Mammary epithelial cell (primary cell): ENCODE measurements at regions of chr2 and their contacts with region 1.

Region 1: GRCh38 chr2:7203055-7203467 is 285.8 kb downstream of the RNF144A start:
- DNase-seq: peak; percentile 26
- H3K4me3 ChIP-seq: no peak overlapping the region
- H3K27ac ChIP-seq: no peak overlapping the region
- H3K4me1 ChIP-seq: no peaks in the 10 kb centered on the region
- H3K27me3 ChIP-seq: no peaks in the 10 kb centered on the region
- CTCF ChIP-seq: peak; percentile 85 to 89

Region 2: GRCh38 chr2:7118606-7119503 is 84.2 kb before region 1 on chr2:
- CTCF ChIA-PET with region 1: no interaction called
- dilution Hi-C with region 1: no loop called
- in situ Hi-C with region 1: no loop called
- intact Hi-C with region 1: loop called (anchors 2 kb)
- DNase-seq: peak; percentile 11
- H3K4me3 ChIP-seq: no peak overlapping the region
- H3K27ac ChIP-seq: no peak overlapping the region
- H3K4me1 ChIP-seq: no peaks in the 10 kb centered on the region
- H3K27me3 ChIP-seq: no peaks in the 10 kb centered on the region
- CTCF ChIP-seq: peak; percentile 66 to 67

Region 3: GRCh38 chr2:7180638-7181370 is 22.3 kb before region 1 on chr2:
- CTCF ChIA-PET with region 1: interaction called, 27 read pairs
- dilution Hi-C with region 1: no loop called
- in situ Hi-C with region 1: no loop called
- intact Hi-C with region 1: no loop called
- DNase-seq: peak; percentile 72
- H3K4me3 ChIP-seq: no peak overlapping the region
- H3K27ac ChIP-seq: peak overlapping the region; percentile 30
- H3K4me1 ChIP-seq: peaks cover 16% of the 10 kb centered on the region
- H3K27me3 ChIP-seq: no peaks in the 10 kb centered on the region
- CTCF ChIP-seq: no peak

Region 4: DNA sequence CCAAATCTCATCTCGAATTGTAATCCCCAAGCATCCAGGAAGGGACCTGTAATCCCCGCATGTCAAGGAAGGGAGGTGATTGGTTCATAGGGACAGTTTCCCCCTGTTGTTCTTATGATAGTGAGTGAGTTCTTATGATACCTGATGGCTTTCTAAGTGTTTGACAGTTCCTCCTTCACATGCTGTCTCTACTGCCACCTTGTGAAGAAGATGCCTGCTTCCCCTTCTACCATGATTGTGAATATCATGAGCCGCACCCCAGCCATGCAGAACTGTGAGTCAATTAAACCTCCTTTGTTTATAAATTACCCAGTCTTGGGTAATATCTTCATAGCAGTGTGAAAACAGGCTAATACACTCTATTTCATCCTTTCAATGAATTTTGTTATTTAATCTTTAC is 160.8 kb after region 1 on chr2:
- CTCF ChIA-PET with region 1: no interaction called
- dilution Hi-C with region 1: no loop called
- in situ Hi-C with region 1: no loop called
- intact Hi-C with region 1: loop called (anchors 1 kb)
- DNase-seq: no peak
- H3K4me3 ChIP-seq: no peak overlapping the region
- H3K27ac ChIP-seq: no peak overlapping the region
- H3K4me1 ChIP-seq: peaks cover 5% of the 10 kb centered on the region
- H3K27me3 ChIP-seq: no peaks in the 10 kb centered on the region
- CTCF ChIP-seq: peak in 1 of 2 donors; percentile 56

Region 5: DNA sequence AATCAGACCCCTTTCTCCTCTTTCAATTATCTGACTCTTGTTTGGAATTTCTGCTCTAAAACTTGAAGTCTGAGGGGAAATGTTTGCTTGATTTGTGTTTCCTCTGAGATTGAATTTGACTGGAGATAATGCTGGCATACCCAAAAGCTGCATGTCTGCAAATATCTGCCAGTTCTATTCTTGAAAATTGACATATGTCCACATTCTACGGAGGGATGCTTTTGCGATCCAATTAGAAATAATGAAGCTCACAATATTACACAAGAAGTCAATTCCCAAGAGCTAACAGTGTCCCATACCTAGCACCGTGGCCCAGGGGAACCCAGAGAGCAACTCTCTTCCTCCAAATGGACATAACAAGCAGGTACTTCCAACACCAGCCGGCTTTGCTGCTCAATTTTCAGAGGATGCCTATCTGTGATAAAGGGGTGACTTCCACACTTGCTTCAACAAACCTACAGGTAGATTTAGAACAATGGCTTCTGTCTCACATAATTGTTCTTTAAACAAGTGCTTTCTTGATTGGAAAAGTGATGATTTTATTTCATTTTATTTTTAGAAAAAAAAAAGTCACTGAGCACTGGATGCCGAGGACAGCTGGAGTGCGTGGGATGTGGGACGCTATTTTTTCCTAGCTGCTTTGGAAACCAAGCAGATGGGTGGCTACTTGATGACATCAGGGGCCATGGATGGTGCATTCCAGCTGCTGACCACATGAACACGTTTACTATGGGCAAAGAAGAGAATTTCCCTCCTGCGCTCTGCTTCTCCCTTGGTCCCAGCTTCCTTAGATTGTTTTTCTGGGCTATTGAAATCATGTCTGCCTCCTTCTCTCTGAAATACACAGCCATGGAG is 203.0 kb after region 1 on chr2:
- CTCF ChIA-PET with region 1: interaction called, 25 read pairs
- dilution Hi-C with region 1: no loop called
- in situ Hi-C with region 1: no loop called
- intact Hi-C with region 1: no loop called
- DNase-seq: no peak
- H3K4me3 ChIP-seq: no peak overlapping the region
- H3K27ac ChIP-seq: no peak overlapping the region
- H3K4me1 ChIP-seq: no peaks in the 10 kb centered on the region
- H3K27me3 ChIP-seq: no peaks in the 10 kb centered on the region
- CTCF ChIP-seq: no peak

Region 6: GRCh38 chr2:7427293-7428060 is 224.4 kb after region 1 on chr2:
- CTCF ChIA-PET with region 1: no interaction called
- dilution Hi-C with region 1: no loop called
- in situ Hi-C with region 1: no loop called
- intact Hi-C with region 1: loop called (anchors 2 kb)
- DNase-seq: peak; percentile 37
- H3K4me3 ChIP-seq: no peak overlapping the region
- H3K27ac ChIP-seq: no peak overlapping the region
- H3K4me1 ChIP-seq: peaks cover 8% of the 10 kb centered on the region
- H3K27me3 ChIP-seq: peaks cover 2% of the 10 kb centered on the region
- CTCF ChIP-seq: peak; percentile 61 to 66

Region 7: DNA sequence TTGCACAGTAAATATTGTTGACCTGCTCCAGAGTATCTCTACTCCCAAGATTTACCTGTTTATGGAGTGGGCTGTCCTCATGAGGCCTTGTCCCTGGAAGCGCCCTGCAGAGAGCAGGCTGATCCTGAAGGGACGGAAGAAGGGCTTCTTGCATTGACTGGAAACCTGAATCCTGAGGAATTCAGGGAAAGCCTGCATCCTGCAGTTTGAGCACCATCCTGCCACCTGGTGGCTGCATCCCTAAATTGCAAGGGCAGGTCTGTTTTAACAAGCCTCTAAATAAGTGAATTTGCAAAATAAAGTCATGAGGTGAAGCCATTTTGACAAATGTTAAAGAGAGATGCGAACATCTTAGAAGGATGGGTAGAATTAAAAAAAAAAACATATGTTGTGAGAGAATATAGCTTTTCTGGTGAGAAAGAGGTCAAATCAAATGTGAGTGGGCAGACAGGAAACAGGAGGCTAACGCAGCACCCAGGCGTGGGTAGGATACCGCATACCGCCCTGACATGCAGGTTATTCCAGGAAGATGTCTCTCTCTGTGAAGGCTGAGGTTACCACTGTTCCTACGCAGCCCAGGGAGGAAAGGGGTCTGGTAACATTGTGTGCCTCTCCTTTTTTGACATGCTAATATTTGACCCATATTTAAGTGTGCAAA is 469.1 kb after region 1 on chr2:
- CTCF ChIA-PET with region 1: no interaction called
- dilution Hi-C with region 1: no loop called
- in situ Hi-C with region 1: no loop called
- intact Hi-C with region 1: loop called (anchors 5 kb)
- DNase-seq: peak; percentile 24
- H3K4me3 ChIP-seq: no peak overlapping the region
- H3K27ac ChIP-seq: no peak overlapping the region
- H3K4me1 ChIP-seq: no peaks in the 10 kb centered on the region
- H3K27me3 ChIP-seq: no peaks in the 10 kb centered on the region
- CTCF ChIP-seq: peak; percentile 65 to 76